CD8-positive, alpha-beta memory T cell (primary cell): ENCODE measurements at regions of chr5 and their contacts with region 1.

Region 1: DNA sequence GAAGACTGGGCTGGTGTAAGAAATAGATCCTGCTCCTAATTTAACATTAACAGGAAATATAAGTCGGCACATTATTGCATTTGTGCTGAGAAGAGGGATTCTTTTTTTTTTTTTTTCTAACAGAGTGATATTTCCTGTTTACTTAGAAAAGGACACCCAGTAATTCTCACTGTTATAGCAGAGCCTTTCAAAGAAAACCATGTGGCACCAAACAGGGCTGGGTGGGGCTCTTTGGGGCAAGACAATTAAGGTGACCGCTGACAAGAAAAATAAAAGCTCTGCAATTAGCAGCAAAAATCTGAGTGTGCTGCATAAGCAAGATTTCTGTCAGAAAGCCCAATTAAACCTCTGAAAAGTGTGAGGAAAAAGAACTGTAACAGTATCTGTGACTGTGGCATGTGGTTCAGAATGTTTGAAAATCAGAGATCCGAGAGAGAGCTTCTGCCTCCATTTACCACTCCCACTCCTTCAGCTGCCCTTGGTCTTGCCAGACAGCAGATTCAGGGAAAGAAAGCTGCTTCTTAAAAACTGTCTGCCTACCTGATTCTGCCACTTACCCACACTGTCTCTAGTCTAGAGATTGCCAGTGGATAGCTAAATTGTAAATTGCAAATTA is 77.1 kb upstream of the IQGAP2 start:
- DNase-seq: peak; percentile 10 to 66 (median 37)
- H3K4me3 ChIP-seq: peak overlapping the region; percentile 33
- H3K4me3 Mint-ChIP-seq: peak overlapping the region; percentile 48 to 83 (median 81)
- H3K27ac ChIP-seq: peak overlapping the region; percentile 13
- H3K27ac Mint-ChIP-seq: peak overlapping the region; percentile 92 to 99 (median 96)
- H3K4me1 ChIP-seq: peaks cover 64% of the 10 kb centered on the region
- H3K4me1 Mint-ChIP-seq: peaks cover 71 to 83% (median 83%) of the 10 kb centered on the region in 3 donors
- H3K27me3 ChIP-seq: no peaks in the 10 kb centered on the region
- H3K27me3 Mint-ChIP-seq: no peaks in the 10 kb centered on the region

Region 2: GRCh38 chr5:76269932-76270610 is 55.9 kb before region 1 on chr5:
- CTCF ChIA-PET with region 1: no interaction called
- POLR2A ChIA-PET with region 1: no interaction called
- DNase-seq: no peak
- H3K4me3 ChIP-seq: no peak overlapping the region
- H3K4me3 Mint-ChIP-seq: no peak overlapping the region
- H3K27ac ChIP-seq: no peak overlapping the region
- H3K27ac Mint-ChIP-seq: peak overlapping the region in 2 of 8 donors; percentile 3 to 30
- H3K4me1 ChIP-seq: no peaks in the 10 kb centered on the region
- H3K4me1 Mint-ChIP-seq: peaks cover 3 to 15% (median 11%) of the 10 kb centered on the region in 3 donors
- H3K27me3 ChIP-seq: no peaks in the 10 kb centered on the region
- H3K27me3 Mint-ChIP-seq: peaks cover 11 to 15% of the 10 kb centered on the region in 2 donors

Region 3: GRCh38 chr5:76310208-76310607 is 15.8 kb before region 1 on chr5:
- CTCF ChIA-PET with region 1: interaction called, 10 read pairs
- POLR2A ChIA-PET with region 1: interaction called, 3 read pairs
- DNase-seq: no peak
- H3K4me3 ChIP-seq: no peak overlapping the region
- H3K4me3 Mint-ChIP-seq: no peak overlapping the region
- H3K27ac ChIP-seq: no peak overlapping the region
- H3K27ac Mint-ChIP-seq: peak overlapping the region in 1 of 8 donors; percentile 24
- H3K4me1 ChIP-seq: no peaks in the 10 kb centered on the region
- H3K4me1 Mint-ChIP-seq: peaks cover 6 to 27% (median 11%) of the 10 kb centered on the region in 3 donors
- H3K27me3 ChIP-seq: no peaks in the 10 kb centered on the region
- H3K27me3 Mint-ChIP-seq: peaks cover 0 to 1% of the 10 kb centered on the region in 2 donors

Region 4: GRCh38 chr5:76379316-76379715 is 53.3 kb after region 1 on chr5:
- CTCF ChIA-PET with region 1: interaction called, 3 read pairs
- POLR2A ChIA-PET with region 1: interaction called, 11 read pairs
- DNase-seq: no peak
- H3K4me3 ChIP-seq: no peak overlapping the region
- H3K4me3 Mint-ChIP-seq: peak overlapping the region in 3 of 7 donors; percentile 0 to 70 (median 45)
- H3K27ac ChIP-seq: no peak overlapping the region
- H3K27ac Mint-ChIP-seq: peak overlapping the region in 6 of 8 donors; percentile 3 to 78 (median 26)
- H3K4me1 ChIP-seq: peaks cover 24% of the 10 kb centered on the region
- H3K4me1 Mint-ChIP-seq: peaks cover 44 to 56% (median 54%) of the 10 kb centered on the region in 3 donors
- H3K27me3 ChIP-seq: no peaks in the 10 kb centered on the region
- H3K27me3 Mint-ChIP-seq: no peaks in the 10 kb centered on the region

Region 5: DNA sequence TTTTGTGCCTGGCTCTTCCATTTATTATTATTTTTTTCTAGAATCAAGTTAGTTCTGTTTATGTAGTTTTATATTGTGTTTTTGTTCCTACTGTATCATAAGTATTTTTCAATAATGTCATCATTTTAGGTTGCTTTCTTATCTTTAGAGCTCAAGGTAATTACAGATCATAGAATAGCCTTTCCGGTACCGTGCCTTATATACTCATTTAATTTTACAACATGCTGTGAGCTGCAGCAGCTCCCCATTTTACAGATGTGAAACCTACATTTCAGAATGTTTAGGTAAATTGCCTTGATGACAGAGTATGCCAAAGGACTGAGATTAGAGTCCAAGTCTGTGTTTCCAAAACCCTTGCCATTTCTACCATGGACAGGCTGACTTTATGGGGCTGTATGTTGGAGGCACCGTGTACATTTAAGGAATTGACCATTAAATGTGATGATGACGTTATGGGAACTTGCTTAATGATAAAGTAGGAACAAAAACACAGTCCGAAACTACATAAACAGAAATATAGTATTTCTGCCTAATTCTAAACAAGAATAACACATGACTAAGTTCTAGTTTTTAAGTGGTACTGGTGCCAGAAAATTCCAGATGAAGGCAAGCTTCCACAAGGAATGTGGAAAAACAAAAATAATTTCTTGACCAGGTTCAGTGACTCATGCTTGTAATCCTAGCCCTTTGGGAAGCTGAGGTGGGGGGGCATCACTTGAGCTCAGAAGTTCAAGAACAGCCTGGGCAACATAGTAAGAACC is 174.8 kb after region 1 on chr5:
- CTCF ChIA-PET with region 1: no interaction called
- POLR2A ChIA-PET with region 1: no interaction called
- DNase-seq: no peak
- H3K4me3 ChIP-seq: no peak overlapping the region
- H3K4me3 Mint-ChIP-seq: no peak overlapping the region
- H3K27ac ChIP-seq: no peak overlapping the region
- H3K27ac Mint-ChIP-seq: peak overlapping the region in 3 of 8 donors; percentile 26 to 68 (median 54)
- H3K4me1 ChIP-seq: peaks cover 21% of the 10 kb centered on the region
- H3K4me1 Mint-ChIP-seq: peaks cover 67 to 83% (median 81%) of the 10 kb centered on the region in 3 donors
- H3K27me3 ChIP-seq: no peaks in the 10 kb centered on the region
- H3K27me3 Mint-ChIP-seq: no peaks in the 10 kb centered on the region